SK-N-SH (cell line): ENCODE measurements at regions of chr5 and their contacts with region 1.

Region 1: GRCh38 chr5:168987543-168988300 is 313.2 kb downstream of the SLIT3 start:
- DNase-seq: peak; percentile 63
- H3K4me3 ChIP-seq: no peak overlapping the region
- H3K27ac ChIP-seq: peak overlapping the region in 1 of 2 experiments; percentile 25; a peak in 1 of 4 replicates
- H3K4me1 ChIP-seq: peaks cover 0 to 57% of the 10 kb centered on the region in 2 experiments; a peak in 2 of 4 replicates
- H3K27me3 ChIP-seq: no peaks in the 10 kb centered on the region
- CTCF ChIP-seq: peak; percentile 94
- EP300 ChIP-seq: peak in 1 of 2 experiments; percentile 11; a peak in 1 of 4 replicates
- RAD21 ChIP-seq: peak; percentile 97

Region 2: DNA sequence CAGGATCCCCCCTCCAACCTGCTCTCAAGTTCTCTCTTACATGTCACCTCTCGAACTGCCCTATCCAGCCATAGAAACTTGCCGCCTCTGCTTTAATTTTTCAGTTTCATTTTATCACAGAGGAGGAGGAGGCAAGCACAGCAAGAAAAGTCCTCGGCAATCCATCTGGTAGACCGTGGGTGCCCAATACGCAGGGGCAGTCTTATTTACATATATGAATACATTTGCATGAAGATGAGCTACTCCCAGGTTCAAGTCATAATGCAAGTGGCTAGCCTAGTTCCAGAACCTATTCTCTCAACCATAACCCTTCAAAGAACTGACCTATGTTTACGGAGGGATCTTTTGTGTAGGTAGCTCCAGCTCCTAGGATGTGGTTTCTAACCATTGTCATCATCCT is 185.4 kb before region 1 on chr5:
- CTCF ChIA-PET with region 1: no interaction called
- POLR2A ChIA-PET with region 1: no interaction called
- DNase-seq: no peak
- H3K4me3 ChIP-seq: no peak overlapping the region
- H3K27ac ChIP-seq: peak overlapping the region; percentile 52 to 73; a peak in 3 of 4 replicates
- H3K4me1 ChIP-seq: peaks cover 4 to 51% of the 10 kb centered on the region in 2 experiments; a peak in 2 of 4 replicates
- H3K27me3 ChIP-seq: no peaks in the 10 kb centered on the region
- CTCF ChIP-seq: no peak
- EP300 ChIP-seq: no peak
- RAD21 ChIP-seq: no peak

Region 3: GRCh38 chr5:168851902-168852321 is 135.8 kb before region 1 on chr5:
- CTCF ChIA-PET with region 1: no interaction called
- POLR2A ChIA-PET with region 1: no interaction called
- DNase-seq: peak; percentile 86
- H3K4me3 ChIP-seq: peak overlapping the region; percentile 21 to 39; a peak in 3 of 4 replicates
- H3K27ac ChIP-seq: peak overlapping the region; percentile 88 to 94
- H3K4me1 ChIP-seq: peaks cover 5 to 68% of the 10 kb centered on the region in 2 experiments
- H3K27me3 ChIP-seq: no peaks in the 10 kb centered on the region
- CTCF ChIP-seq: no peak
- EP300 ChIP-seq: peak in 1 of 2 experiments; percentile 55; a peak in 2 of 4 replicates
- RAD21 ChIP-seq: peak; percentile 7; the same call in 1 of the 2 replicates

Region 4: GRCh38 chr5:169142264-169142970 is 154.7 kb after region 1 on chr5:
- CTCF ChIA-PET with region 1: interaction called, 97 read pairs
- POLR2A ChIA-PET with region 1: no interaction called
- DNase-seq: peak; percentile 61
- H3K4me3 ChIP-seq: no peak overlapping the region
- H3K27ac ChIP-seq: peak overlapping the region in 1 of 2 experiments; percentile 79; a peak in 3 of 4 replicates
- H3K4me1 ChIP-seq: peaks cover 0 to 31% of the 10 kb centered on the region in 2 experiments; a peak in 2 of 4 replicates
- H3K27me3 ChIP-seq: no peaks in the 10 kb centered on the region
- CTCF ChIP-seq: no peak
- EP300 ChIP-seq: peak in 1 of 2 experiments; percentile 95; a peak in 2 of 4 replicates
- RAD21 ChIP-seq: no peak; the same call in none of the 2 replicates

Region 5: GRCh38 chr5:169176709-169177694 is 189.3 kb after region 1 on chr5:
- CTCF ChIA-PET with region 1: interaction called, 11 read pairs
- POLR2A ChIA-PET with region 1: no interaction called
- DNase-seq: peak; percentile 62
- H3K4me3 ChIP-seq: no peak overlapping the region
- H3K27ac ChIP-seq: peak overlapping the region in 1 of 2 experiments; percentile 95; a peak in 2 of 4 replicates
- H3K4me1 ChIP-seq: peaks cover 0 to 45% of the 10 kb centered on the region in 2 experiments; a peak in 2 of 4 replicates
- H3K27me3 ChIP-seq: no peaks in the 10 kb centered on the region
- CTCF ChIP-seq: no peak
- EP300 ChIP-seq: peak in 1 of 2 experiments; percentile 98; a peak in 2 of 4 replicates
- RAD21 ChIP-seq: peak; percentile 24

Region 6: DNA sequence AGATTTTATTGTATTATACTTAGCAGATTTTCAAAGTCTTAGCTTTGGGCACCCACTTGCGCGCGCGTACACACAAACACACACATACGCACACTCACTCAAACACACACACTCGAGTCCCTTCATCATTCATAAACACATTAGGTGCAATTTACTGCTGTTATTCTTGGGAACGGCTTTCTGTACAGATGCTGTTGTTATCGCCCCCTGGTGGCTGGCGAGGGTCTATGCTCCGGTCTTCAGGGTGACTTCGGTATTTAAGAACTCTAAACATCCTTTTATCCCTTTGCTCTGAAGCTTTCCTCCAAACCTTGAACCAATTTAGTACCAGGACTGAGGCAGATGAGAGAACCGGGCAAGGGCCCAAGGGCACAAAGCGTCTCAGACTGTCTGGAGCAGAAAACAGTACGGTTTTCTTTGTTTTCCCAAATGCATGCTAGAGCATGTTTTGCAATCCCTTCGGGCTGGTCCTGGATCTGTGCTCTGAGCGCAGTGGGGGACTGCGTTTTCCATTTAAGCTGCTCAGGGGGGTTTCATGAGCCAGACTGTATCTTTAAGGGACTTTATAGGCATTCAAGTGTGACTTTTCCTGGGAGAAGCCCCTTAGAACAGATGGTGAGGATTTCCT is 314.9 kb after region 1 on chr5:
- CTCF ChIA-PET with region 1: interaction called, 65 read pairs
- POLR2A ChIA-PET with region 1: interaction called, 3 read pairs
- DNase-seq: peak; percentile 69
- H3K4me3 ChIP-seq: peak overlapping the region in 1 of 2 experiments; percentile 18; a peak in 1 of 4 replicates
- H3K27ac ChIP-seq: peak overlapping the region; percentile 46 to 80; a peak in 2 of 4 replicates
- H3K4me1 ChIP-seq: peaks cover 10 to 31% of the 10 kb centered on the region in 2 experiments; a peak in 2 of 4 replicates
- H3K27me3 ChIP-seq: no peaks in the 10 kb centered on the region
- CTCF ChIP-seq: peak; percentile 96
- EP300 ChIP-seq: no peak
- RAD21 ChIP-seq: peak; percentile 91

Region 7: GRCh38 chr5:169561893-169562292 is 574.2 kb after region 1 on chr5:
- CTCF ChIA-PET with region 1: interaction called, 10 read pairs
- POLR2A ChIA-PET with region 1: no interaction called
- DNase-seq: no peak
- H3K4me3 ChIP-seq: no peak overlapping the region
- H3K27ac ChIP-seq: no peak overlapping the region
- H3K4me1 ChIP-seq: no peaks in the 10 kb centered on the region
- H3K27me3 ChIP-seq: no peaks in the 10 kb centered on the region
- CTCF ChIP-seq: no peak
- EP300 ChIP-seq: no peak
- RAD21 ChIP-seq: no peak